ENCODE measurements at regions of chrX and their contacts with region 1.

Region 1: GRCh38 chrX:69387567-69388487 is 116.3 kb upstream of the NALF2 start:
- DNase-seq: peak; percentile 86

Region 2: GRCh38 chrX:68822641-68823410 is 565.0 kb before region 1 on chrX:
- CTCF ChIA-PET with region 1: interaction called, 16 read pairs
- POLR2A ChIA-PET with region 1: interaction called, 8 read pairs
- DNase-seq: peak; percentile 71

Region 3: GRCh38 chrX:69222103-69223090 is 165.4 kb before region 1 on chrX:
- CTCF ChIA-PET with region 1: interaction called, 10 read pairs
- POLR2A ChIA-PET with region 1: no interaction called
- DNase-seq: peak; percentile 81

Region 4: GRCh38 chrX:69285401-69285877 is 102.4 kb before region 1 on chrX:
- CTCF ChIA-PET with region 1: interaction called, 11 read pairs
- POLR2A ChIA-PET with region 1: interaction called, 5 read pairs
- DNase-seq: no peak

Region 5: GRCh38 chrX:69374569-69374968 is 13.3 kb before region 1 on chrX:
- CTCF ChIA-PET with region 1: interaction called, 11 read pairs
- POLR2A ChIA-PET with region 1: no interaction called
- DNase-seq: no peak

Region 6: DNA sequence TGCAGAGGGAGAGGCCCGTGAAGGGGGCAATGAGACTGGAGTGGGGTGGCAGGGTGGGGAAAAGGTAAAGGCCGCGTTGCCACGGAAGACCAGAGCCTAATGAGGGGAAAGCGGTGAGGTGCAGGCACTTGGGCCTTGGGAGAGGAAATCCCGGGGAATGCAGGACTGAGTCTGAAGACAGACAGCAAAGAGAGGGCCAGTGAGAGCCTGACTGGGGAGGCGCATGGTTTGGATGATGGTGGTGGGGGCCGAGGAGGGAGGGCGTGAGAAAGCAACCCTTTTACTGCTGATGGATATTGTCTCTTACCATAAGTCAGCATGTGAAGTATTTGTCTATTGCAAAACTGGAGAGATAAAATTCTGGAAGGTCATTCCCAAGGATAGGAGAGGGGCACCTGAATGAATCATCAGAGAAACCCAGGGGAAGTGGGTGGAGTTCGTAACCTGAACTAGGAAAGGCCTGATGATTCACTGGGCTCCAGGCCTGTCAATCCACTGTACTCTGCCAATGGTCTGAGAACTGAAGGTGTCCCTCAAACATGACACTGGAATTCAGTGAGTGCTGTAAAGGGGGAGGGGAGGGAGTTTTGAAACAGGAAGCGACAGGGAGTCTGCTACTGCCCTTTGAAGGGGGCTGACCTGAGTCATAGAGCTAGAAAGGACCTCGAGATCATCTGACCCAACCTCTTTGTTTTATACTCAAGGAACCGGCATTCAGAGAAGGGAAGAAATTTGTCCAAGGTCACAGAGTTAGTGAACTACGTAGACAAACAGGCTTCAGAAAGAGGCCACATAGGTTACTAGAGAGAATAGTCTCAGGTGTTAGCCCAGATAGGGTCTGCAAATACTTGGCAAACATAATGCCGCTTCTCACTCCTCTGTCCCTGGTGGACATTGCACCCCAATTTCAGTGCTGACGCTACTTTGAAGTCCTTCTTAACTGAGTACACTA is 168.5 kb after region 1 on chrX:
- CTCF ChIA-PET with region 1: no interaction called
- POLR2A ChIA-PET with region 1: no interaction called
- DNase-seq: peak; percentile 12

Measured in HEK293T (cell line).